ENCODE measurements at regions of chr16 and their contacts with region 1.

Region 1: GRCh38 chr16:4859900-4860255 is 12.6 kb downstream of the UBN1 start:
- DNase-seq: no peak
- H3K4me3 ChIP-seq: no peak overlapping the region
- H3K4me3 Mint-ChIP-seq: no peak overlapping the region
- H3K27ac Mint-ChIP-seq: no peak overlapping the region
- H3K4me1 ChIP-seq: no peaks in the 10 kb centered on the region
- H3K4me1 Mint-ChIP-seq: no peaks in the 10 kb centered on the region
- H3K27me3 ChIP-seq: no peaks in the 10 kb centered on the region
- H3K27me3 Mint-ChIP-seq: no peaks in the 10 kb centered on the region
- CTCF ChIP-seq: no peak

Region 2: DNA sequence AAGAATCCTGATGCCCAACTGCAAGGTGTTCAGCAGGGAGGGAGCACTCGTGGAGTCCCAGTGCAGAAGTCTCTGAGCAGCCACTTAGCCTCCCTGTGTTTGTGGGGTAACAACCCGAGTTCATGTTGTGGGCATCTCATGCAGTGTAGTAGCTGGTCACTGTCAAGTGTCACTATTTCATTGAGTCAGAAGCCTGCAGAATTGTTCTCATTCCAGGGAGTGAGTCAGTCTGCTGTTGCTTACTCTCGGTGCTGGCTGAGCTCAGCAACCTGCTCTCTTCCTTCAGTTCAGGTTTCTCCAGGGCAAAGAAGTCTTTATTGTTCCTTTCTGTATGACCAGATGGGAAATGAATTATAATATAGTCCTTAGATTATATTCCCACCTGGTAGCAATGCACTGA is 359.6 kb before region 1 on chr16:
- CTCF ChIA-PET with region 1: no interaction called
- POLR2A ChIA-PET with region 1: no interaction called
- intact Hi-C with region 1: no loop called
- DNase-seq: no peak
- H3K4me3 ChIP-seq: no peak overlapping the region
- H3K4me3 Mint-ChIP-seq: no peak overlapping the region
- H3K27ac Mint-ChIP-seq: peak overlapping the region; percentile 42
- H3K4me1 ChIP-seq: peaks cover 16% of the 10 kb centered on the region
- H3K4me1 Mint-ChIP-seq: peaks cover 26% of the 10 kb centered on the region
- H3K27me3 ChIP-seq: no peaks in the 10 kb centered on the region
- H3K27me3 Mint-ChIP-seq: no peaks in the 10 kb centered on the region
- CTCF ChIP-seq: no peak

Region 3: DNA sequence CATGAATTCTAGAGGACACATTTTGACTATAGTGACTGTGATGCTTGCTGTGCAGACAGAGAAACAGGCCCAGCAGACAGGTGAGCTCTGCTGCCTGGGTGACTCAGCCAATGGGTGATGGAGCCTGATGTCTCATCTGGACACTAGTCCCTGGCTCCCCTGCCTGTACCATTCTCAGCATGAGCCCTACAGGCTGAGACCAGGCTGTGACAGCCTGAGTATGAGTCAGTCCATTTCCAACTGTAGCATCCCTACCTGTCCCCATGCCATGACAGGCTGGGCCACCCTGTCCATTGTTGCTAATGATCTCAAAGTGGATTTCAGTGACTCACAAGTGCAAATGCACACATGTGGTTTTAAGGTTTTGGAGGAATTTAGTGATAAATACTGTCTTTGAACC is 340.2 kb after region 1 on chr16:
- CTCF ChIA-PET with region 1: no interaction called
- POLR2A ChIA-PET with region 1: interaction called, 11 read pairs
- intact Hi-C with region 1: no loop called
- DNase-seq: no peak
- H3K4me3 ChIP-seq: no peak overlapping the region
- H3K4me3 Mint-ChIP-seq: no peak overlapping the region
- H3K27ac Mint-ChIP-seq: no peak overlapping the region
- H3K4me1 ChIP-seq: no peaks in the 10 kb centered on the region
- H3K4me1 Mint-ChIP-seq: no peaks in the 10 kb centered on the region
- H3K27me3 ChIP-seq: no peaks in the 10 kb centered on the region
- H3K27me3 Mint-ChIP-seq: peaks cover 3% of the 10 kb centered on the region
- CTCF ChIP-seq: no peak

Measured in Caco-2 (cell line).